RWPE1 (cell line): ENCODE measurements at regions of chr19 and their contacts with region 1.

Region 1: GRCh38 chr19:53808710-53809125 is 15.4 kb downstream of the NLRP12 start:
- DNase-seq: peak; percentile 14
- H3K27ac ChIP-seq: no peak overlapping the region
- CTCF ChIP-seq: peak; percentile 62

Region 2: DNA sequence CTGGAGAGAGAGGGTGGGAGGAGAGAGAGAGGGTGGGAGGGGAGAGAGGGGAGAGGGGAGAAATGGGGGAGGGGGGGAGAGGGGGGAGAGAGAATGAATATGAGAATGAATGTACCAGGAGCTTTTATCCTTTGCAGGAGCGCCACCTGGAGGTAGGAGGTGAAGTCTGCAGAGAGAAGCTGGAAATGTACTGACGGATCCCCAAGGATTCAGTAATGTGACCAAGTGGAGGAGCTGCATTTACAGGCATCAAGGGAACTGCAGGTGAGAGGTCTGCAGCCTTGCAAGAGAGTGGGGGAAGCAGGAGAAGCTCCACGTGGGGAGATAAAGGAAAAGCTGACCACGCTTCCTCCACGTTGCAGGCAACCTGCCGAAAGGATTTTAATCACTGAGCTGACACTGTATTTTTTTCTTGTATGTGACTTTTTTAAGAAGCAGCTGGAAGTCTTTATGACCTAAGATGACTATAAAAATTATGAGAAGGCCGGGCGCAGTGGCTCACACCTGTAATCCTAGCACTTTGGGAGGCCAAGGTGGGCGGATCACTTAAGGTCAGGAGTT is 221.3 kb after region 1 on chr19:
- CTCF ChIA-PET with region 1: interaction called, 18 read pairs
- POLR2A ChIA-PET with region 1: no interaction called
- DNase-seq: peak; percentile 45
- H3K27ac ChIP-seq: no peak overlapping the region
- CTCF ChIP-seq: peak; percentile 68